ENCODE measurements at regions of chr5 and their contacts with region 1.

Region 1: GRCh38 chr5:53069626-53070025 is 39.9 kb downstream of the MOCS2 start:
- DNase-seq: peak in 1 of 35 experiments; percentile 0
- ATAC-seq: peak in 3 of 4 experiments; percentile 32 to 43 (median 37)
- H3K4me3 ChIP-seq: no peak overlapping the region
- H3K4me3 Mint-ChIP-seq: no peak overlapping the region
- H3K27ac ChIP-seq: no peak overlapping the region
- H3K27ac Mint-ChIP-seq: no peak overlapping the region
- H3K4me1 ChIP-seq: no peaks in the 10 kb centered on the region
- H3K4me1 Mint-ChIP-seq: peaks cover 0 to 10% (median 3%) of the 10 kb centered on the region in 3 donors
- H3K27me3 ChIP-seq: no peaks in the 10 kb centered on the region
- H3K27me3 Mint-ChIP-seq: no peaks in the 10 kb centered on the region

Region 2: DNA sequence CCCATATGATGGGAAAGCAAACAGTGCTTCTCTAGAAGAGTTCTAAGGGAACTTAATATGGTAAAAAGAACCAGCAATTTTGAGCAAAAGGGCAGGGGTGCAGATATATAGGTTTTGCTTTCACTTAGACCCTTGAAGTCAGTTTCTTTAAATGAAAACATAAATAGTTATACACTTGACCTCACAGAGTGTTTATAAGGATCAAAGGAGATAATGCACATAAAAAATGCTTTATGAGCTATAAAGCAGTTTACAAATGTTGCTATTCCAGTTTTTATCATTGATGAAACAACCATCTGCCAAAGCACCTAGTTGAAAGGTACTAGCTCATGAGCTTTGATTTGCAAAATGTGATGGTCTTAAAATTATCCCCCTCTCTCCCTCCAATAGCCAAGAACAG is 34.8 kb before region 1 on chr5:
- CTCF ChIA-PET with region 1: interaction called in 1 of 2 experiments, 14 read pairs
- POLR2A ChIA-PET with region 1: no interaction called
- DNase-seq: no peak
- ATAC-seq: no peak
- H3K4me3 ChIP-seq: no peak overlapping the region
- H3K4me3 Mint-ChIP-seq: no peak overlapping the region
- H3K27ac ChIP-seq: no peak overlapping the region
- H3K27ac Mint-ChIP-seq: no peak overlapping the region
- H3K4me1 ChIP-seq: peaks cover 4 to 9% of the 10 kb centered on the region in 2 experiments
- H3K4me1 Mint-ChIP-seq: peaks cover 13 to 21% (median 19%) of the 10 kb centered on the region in 3 donors
- H3K27me3 ChIP-seq: no peaks in the 10 kb centered on the region
- H3K27me3 Mint-ChIP-seq: no peaks in the 10 kb centered on the region

Region 3: DNA sequence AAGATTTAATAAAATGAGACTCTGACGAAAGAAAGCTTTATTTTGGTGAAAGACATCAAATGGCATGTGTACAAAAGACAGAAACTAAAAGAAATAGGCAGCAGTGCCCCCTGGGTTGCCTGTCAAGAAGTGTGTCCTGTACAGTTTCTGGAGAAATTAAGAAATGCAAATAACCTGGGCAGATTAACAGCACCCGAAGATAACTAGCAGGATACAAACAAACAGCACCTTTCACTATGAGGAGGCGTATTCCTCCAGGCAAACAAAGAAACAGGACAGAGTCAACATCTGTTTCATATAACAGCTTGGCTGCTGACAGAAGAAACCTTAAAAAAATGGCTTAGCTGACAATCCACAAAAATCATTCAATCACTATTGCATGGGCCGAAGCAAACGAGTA is 1078.4 kb after region 1 on chr5:
- CTCF ChIA-PET with region 1: no interaction called
- POLR2A ChIA-PET with region 1: interaction called in 1 of 2 experiments, 10 read pairs
- DNase-seq: no peak
- ATAC-seq: no peak
- H3K4me3 ChIP-seq: no peak overlapping the region
- H3K4me3 Mint-ChIP-seq: no peak overlapping the region
- H3K27ac ChIP-seq: no peak overlapping the region
- H3K27ac Mint-ChIP-seq: no peak overlapping the region
- H3K4me1 ChIP-seq: no peaks in the 10 kb centered on the region
- H3K4me1 Mint-ChIP-seq: no peaks in the 10 kb centered on the region
- H3K27me3 ChIP-seq: no peaks in the 10 kb centered on the region
- H3K27me3 Mint-ChIP-seq: no peaks in the 10 kb centered on the region